Activated CD8-positive, alpha-beta T cell treated with anti-CD3 and anti-CD28 coated beads, Interleukin-2, amount 10 ng/mL, durations not matched to agents 7 days and 5 days (primary cell): ENCODE measurements at regions of chr2 and their contacts with region 1.

Region 1: GRCh38 chr2:69724540-69725159 is 17.3 kb upstream of the ANXA4 start:
- DNase-seq: peak; percentile 91
- ATAC-seq: peak; percentile 95
- H3K4me3 Mint-ChIP-seq: peak overlapping the region; percentile 53
- H3K27ac Mint-ChIP-seq: no peak overlapping the region
- H3K4me1 Mint-ChIP-seq: peaks cover 13% of the 10 kb centered on the region
- H3K27me3 Mint-ChIP-seq: peaks cover 5% of the 10 kb centered on the region

Region 2: DNA sequence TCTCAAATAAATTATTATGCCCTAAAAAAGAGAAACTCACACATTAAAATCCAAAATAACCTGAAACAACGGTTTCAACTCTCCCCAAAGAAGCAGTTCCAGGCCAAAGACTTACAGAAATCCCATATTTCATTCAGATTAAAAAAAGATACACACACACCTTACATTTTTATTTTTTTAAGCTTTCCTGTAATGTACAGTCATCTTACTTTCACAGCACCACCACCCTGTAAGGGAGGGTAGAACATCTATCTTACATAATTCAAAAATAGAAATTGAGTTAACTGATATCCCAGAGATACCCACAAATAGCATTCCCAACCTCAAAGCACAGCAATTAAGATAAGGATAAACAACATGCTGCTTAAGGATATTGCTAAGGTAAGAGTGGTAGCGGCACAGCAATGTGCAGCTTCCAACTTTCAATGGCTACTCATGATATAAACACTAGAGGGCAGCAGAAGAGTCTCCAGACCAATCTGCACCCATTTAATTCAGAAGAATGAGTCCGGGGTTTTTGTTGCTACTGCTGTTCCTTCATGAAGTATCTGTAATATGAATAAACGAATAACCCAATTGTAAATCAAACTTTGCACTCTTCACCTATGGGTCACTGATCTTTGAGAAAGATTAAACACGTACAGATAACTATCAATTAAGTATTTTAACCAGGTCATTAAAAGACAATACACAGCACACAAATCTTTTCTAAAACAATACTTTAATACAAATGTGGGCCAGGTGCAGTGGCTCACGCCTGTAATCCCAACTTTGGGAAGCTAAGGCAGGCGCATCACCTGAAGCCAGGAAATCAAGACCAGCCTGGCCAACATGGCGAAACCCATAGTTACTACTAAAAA is 348.9 kb before region 1 on chr2:
- CTCF ChIA-PET with region 1: interaction called, 10 read pairs
- POLR2A ChIA-PET with region 1: no interaction called
- DNase-seq: peak; percentile 47
- ATAC-seq: peak; percentile 79
- H3K4me3 Mint-ChIP-seq: no peak overlapping the region
- H3K27ac Mint-ChIP-seq: no peak overlapping the region
- H3K4me1 Mint-ChIP-seq: peaks cover 14% of the 10 kb centered on the region
- H3K27me3 Mint-ChIP-seq: no peaks in the 10 kb centered on the region

Region 3: GRCh38 chr2:69565431-69565839 is 159.2 kb before region 1 on chr2:
- CTCF ChIA-PET with region 1: interaction called, 40 read pairs
- POLR2A ChIA-PET with region 1: interaction called, 3 read pairs
- DNase-seq: peak; percentile 80
- ATAC-seq: peak; percentile 89
- H3K4me3 Mint-ChIP-seq: no peak overlapping the region
- H3K27ac Mint-ChIP-seq: peak overlapping the region; percentile 6
- H3K4me1 Mint-ChIP-seq: peaks cover 55% of the 10 kb centered on the region
- H3K27me3 Mint-ChIP-seq: no peaks in the 10 kb centered on the region

Region 4: DNA sequence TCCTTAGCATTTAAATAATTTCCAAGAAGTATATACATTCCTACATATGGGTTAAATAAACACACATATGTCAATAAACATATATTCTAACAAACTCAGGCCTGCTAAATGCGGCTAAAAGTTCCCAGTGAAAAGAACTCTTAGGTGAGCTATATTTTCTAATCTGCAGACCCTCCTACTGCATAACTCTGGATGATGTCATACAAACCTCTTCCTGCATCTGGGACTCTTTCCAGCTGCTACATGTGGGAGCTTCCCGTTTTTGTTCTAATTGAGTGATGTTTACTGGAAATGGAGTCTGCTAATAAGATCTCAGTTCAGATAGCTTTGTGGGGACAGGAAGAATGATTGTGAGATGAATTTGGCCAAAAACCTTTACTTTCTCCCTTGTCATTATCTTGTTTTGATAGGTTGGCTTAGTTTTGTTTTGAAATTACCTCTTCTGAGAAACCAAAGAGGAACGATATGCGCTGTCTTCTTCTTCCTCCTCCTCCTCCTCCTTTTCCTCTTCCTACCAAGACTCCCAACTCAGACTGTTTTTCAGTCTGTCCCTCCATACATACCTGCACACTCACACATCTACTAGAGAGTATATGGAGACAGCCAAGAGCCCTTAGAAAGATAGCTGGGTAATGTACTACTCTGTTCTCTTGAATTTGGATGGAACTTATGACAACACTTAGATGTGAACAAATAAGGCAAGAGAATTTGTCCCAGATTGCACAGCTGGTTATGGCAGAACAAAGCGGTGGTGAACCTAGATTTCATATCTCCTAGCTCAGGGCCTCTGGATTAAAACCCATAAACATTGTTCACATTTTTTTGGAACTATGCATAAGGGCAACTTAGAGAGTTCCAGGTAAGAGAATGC is 41.3 kb before region 1 on chr2:
- CTCF ChIA-PET with region 1: interaction called, 12 read pairs
- POLR2A ChIA-PET with region 1: no interaction called
- DNase-seq: no peak
- ATAC-seq: peak; percentile 35
- H3K4me3 Mint-ChIP-seq: peak overlapping the region; percentile 26
- H3K27ac Mint-ChIP-seq: peak overlapping the region; percentile 68
- H3K4me1 Mint-ChIP-seq: peaks cover 51% of the 10 kb centered on the region
- H3K27me3 Mint-ChIP-seq: no peaks in the 10 kb centered on the region

Region 5: DNA sequence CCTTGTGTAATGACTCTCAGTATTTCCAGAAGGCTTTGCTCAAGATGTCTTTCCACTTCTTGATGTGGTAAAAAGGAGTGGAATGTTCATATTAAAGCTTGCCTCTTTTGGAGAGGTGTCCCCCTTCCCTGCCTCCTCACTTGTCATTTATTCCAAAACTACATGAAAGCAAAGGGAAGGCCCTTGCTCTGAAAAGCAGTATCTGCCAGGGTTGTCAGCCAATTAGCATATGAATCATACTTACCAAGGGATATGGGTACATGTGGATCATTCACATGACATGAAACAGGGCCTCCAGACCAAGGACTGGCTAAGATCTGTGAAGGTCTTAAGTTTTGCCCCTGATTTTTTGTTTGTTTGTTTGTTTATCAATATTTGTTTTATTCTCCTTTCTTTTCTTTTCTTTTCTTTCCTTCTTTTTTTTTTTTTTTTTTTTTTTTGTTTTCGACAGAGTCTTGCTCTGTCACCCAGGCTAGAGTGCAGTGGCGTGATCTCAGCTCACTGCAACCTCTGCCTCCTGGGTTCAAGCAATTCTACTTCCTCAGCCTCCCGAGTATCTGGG is 48.6 kb after region 1 on chr2:
- CTCF ChIA-PET with region 1: interaction called, 20 read pairs
- POLR2A ChIA-PET with region 1: interaction called, 3 read pairs
- DNase-seq: no peak
- ATAC-seq: peak; percentile 21
- H3K4me3 Mint-ChIP-seq: no peak overlapping the region
- H3K27ac Mint-ChIP-seq: no peak overlapping the region
- H3K4me1 Mint-ChIP-seq: peaks cover 60% of the 10 kb centered on the region
- H3K27me3 Mint-ChIP-seq: no peaks in the 10 kb centered on the region

Region 6: DNA sequence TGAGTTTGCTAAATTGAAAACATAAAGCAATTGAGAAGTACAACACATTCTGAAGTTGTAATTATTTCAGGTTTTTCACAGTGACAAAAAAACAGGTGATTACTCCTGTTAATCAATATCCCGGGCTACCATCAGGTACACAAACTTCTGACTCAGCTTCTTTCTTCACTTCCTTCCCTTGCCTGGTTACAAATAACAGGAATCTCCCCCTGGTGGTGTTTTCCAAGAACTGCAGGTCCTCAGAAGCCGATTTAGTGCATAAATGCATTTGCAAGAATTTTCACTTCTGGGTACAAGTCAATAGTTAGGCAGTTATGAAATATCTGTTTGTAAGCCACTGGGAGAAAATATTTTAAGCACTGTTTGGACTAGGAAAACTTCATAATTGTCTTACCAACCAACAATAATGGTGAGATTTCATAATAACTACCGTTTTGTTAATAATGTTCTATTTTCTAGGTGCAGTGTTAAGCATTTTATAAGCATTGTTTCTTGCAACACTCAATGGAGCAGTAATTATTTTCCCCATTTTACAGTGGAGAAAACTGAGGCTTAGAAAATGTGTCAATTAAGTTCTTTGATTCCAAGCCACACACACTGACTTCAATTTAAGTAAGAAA is 92.4 kb after region 1 on chr2:
- CTCF ChIA-PET with region 1: interaction called, 434 read pairs
- POLR2A ChIA-PET with region 1: interaction called, 5 read pairs
- DNase-seq: peak; percentile 87
- ATAC-seq: peak; percentile 75
- H3K4me3 Mint-ChIP-seq: no peak overlapping the region
- H3K27ac Mint-ChIP-seq: no peak overlapping the region
- H3K4me1 Mint-ChIP-seq: peaks cover 11% of the 10 kb centered on the region
- H3K27me3 Mint-ChIP-seq: no peaks in the 10 kb centered on the region

Region 7: DNA sequence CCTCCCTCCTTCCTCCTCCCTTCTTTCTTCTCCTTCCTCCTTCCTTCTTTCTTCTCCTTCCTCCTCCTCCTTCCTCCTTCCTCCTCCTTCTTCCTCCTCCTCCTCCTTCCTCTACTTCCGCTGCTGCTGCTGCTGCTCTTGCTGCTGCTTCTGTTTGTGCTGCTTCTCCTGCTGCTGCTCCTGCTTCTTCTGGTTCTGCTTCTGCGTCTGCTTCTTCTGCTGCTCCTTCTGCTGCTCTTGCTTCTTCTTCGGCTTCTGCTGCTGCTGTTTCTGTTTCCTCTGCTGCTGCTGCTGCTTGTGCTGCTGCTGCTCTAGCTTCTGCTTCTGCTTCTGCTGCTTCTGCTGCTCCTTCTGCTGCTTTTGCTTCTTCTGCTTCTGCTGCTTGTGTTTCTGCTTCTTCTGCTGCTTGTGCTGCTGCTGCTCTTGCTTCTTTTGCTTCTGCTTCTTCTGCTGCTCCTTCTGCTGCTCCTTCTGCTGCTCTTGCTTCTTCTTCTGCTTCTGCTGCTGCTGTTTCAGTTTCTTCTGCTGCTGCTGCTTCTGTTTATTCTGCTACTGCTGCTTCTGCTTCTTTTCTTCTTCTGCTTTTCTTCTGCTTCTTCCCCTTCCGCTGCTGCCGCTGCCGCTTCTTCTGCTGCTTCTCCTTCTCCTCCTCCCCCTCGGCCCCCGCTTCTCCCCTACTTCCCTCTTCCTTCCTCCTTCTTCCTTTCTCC is 177.7 kb after region 1 on chr2:
- CTCF ChIA-PET with region 1: interaction called, 10 read pairs
- POLR2A ChIA-PET with region 1: no interaction called
- DNase-seq: peak; percentile 32
- ATAC-seq: peak; percentile 62
- H3K4me3 Mint-ChIP-seq: peak overlapping the region; percentile 68
- H3K27ac Mint-ChIP-seq: peak overlapping the region; percentile 90
- H3K4me1 Mint-ChIP-seq: peaks cover 41% of the 10 kb centered on the region
- H3K27me3 Mint-ChIP-seq: no peaks in the 10 kb centered on the region

Region 8: DNA sequence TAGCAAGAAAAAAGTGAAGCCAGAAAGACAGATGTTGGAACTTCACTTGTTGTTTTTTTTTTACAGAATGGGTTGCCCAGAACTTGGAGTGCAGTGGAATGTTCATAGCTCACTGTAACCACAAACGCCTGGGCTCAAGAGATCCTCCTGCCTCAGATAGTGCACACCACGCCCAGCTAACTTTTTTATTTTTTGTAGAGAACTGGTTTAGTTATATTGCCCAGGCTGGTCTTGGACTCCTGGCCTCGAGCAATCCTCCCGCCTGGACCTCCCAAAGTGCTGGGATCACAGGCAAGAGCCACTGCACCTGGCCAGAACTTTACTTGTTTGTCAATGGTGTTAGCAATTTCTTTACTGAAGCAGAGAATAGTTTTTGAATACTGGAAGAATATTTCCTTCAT is 248.7 kb after region 1 on chr2:
- CTCF ChIA-PET with region 1: no interaction called
- POLR2A ChIA-PET with region 1: no interaction called
- DNase-seq: no peak
- ATAC-seq: no peak
- H3K4me3 Mint-ChIP-seq: no peak overlapping the region
- H3K27ac Mint-ChIP-seq: no peak overlapping the region
- H3K4me1 Mint-ChIP-seq: peaks cover 14% of the 10 kb centered on the region
- H3K27me3 Mint-ChIP-seq: peaks cover 4% of the 10 kb centered on the region